ENCODE measurements at regions of chr1 and their contacts with region 1.

Region 1: GRCh38 chr1:26826261-26827105 is at the start of gene ZDHHC18:
- DNase-seq: peak in 34 of 35 experiments; percentile 33 to 87 (median 63)
- ATAC-seq: peak; percentile 89 to 92 (median 91)
- H3K4me3 ChIP-seq: peak within 1 kb of the TSS; percentile 58 to 67
- H3K4me3 Mint-ChIP-seq: peak within 1 kb of the TSS; percentile 87 to 98 (median 95)
- H3K27ac ChIP-seq: peak within 1 kb of the TSS; percentile 86
- H3K27ac Mint-ChIP-seq: peak within 1 kb of the TSS; percentile 97 to 99
- H3K4me1 ChIP-seq: peaks cover 12 to 61% of the 10 kb centered on the region in 2 experiments
- H3K4me1 Mint-ChIP-seq: peaks cover 51 to 69% (median 61%) of the 10 kb centered on the region in 3 donors
- H3K27me3 ChIP-seq: no peaks in the 10 kb centered on the region
- H3K27me3 Mint-ChIP-seq: no peaks in the 10 kb centered on the region
- total RNA-seq, gene ZDHHC18: 41.1 to 59.9 (median 50.6) TPM

Region 2: GRCh38 chr1:26811708-26812107 is 14.8 kb before region 1 on chr1:
- CTCF ChIA-PET with region 1: interaction called, 4 to 17 read pairs
- POLR2A ChIA-PET with region 1: interaction called in 1 of 2 experiments, 3 read pairs
- DNase-seq: no peak
- ATAC-seq: no peak
- H3K4me3 ChIP-seq: no peak overlapping the region
- H3K4me3 Mint-ChIP-seq: no peak overlapping the region
- H3K27ac ChIP-seq: no peak overlapping the region
- H3K27ac Mint-ChIP-seq: no peak overlapping the region
- H3K4me1 ChIP-seq: peaks cover 0 to 14% of the 10 kb centered on the region in 2 experiments
- H3K4me1 Mint-ChIP-seq: peaks cover 11 to 15% (median 11%) of the 10 kb centered on the region in 3 donors
- H3K27me3 ChIP-seq: no peaks in the 10 kb centered on the region
- H3K27me3 Mint-ChIP-seq: no peaks in the 10 kb centered on the region